ENCODE measurements at regions of chr2 and their contacts with region 1.

Region 1: DNA sequence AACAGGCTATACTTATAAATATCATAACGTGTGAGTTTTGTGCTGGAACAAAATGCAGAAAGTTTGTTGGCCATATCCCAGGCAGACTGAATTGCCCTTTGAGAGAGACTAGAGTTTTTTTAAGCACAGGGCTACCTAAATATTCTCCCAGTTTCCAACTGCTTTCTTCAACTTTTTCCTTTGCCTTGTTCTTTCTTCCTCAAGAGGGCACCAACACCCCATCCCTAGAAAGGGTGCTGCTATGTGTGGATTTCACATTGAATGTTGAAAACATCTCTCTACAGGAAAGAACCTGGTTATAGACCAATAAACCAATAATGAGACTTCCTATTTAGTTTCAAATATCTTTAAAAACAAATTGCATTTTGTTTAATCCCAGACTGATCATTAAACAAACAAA is 87.9 kb downstream of the ICOS start:
- DNase-seq: no peak
- H3K4me3 ChIP-seq: no peak overlapping the region
- H3K27ac ChIP-seq: no peak overlapping the region
- H3K4me1 ChIP-seq: no peaks in the 10 kb centered on the region
- H3K27me3 ChIP-seq: no peaks in the 10 kb centered on the region; a peak in 1 of 7 replicates
- CTCF ChIP-seq: peak in 2 of 3 experiments; percentile 61 to 66; a peak in 3 of 4 replicates
- EP300 ChIP-seq: no peak
- POLR2A ChIP-seq: no peak
- RAD21 ChIP-seq: peak; percentile 82 to 84

Region 2: DNA sequence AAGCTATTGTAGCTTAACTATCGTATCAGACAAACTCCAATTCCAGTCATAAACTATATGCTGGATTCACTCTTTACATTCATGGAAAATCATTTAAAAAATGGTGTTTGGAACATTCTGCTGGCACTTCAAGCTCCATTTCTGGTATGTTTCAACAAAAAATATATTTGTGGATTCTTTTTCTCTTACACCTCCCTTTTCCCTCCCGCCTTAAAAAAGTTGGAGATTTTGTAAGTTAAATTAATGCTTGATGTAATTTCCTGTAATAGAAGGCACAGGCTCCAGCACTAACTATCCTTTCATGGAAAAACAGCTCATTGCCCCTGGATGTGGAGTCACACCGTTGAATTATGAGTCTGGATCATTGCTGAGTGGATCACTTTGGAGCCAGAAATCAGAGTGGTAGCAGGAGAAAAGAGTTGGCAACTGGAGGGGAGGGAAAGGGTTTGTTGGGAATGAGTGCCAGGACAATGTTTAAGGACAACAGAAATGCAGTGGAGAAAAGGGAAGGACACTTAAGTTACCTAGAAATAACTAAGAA is 14.9 kb after region 1 on chr2:
- CTCF ChIA-PET with region 1: interaction called, 20 read pairs
- POLR2A ChIA-PET with region 1: no interaction called
- DNase-seq: no peak
- H3K4me3 ChIP-seq: no peak overlapping the region
- H3K27ac ChIP-seq: no peak overlapping the region
- H3K4me1 ChIP-seq: no peaks in the 10 kb centered on the region
- H3K27me3 ChIP-seq: no peaks in the 10 kb centered on the region
- CTCF ChIP-seq: no peak
- EP300 ChIP-seq: no peak
- POLR2A ChIP-seq: no peak
- RAD21 ChIP-seq: no peak

Region 3: DNA sequence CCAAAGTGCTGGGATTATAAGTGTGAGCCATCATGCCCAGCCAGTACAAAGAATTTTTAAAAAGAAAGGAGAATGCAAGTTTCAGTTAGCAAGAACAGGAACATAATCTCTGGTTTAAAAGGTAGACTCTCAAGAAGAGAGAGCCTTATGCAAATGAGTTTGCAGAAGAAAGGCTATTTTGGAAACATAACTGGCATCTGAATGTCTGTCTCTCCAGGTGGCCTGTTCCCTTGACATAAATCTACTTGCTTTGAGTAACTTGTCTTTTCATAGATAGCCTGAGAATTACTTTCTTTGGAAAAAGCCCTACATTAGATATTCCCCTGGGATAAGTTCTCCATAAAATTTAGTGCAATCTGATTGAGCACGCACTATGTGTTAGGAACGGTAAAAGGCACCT is 21.6 kb after region 1 on chr2:
- CTCF ChIA-PET with region 1: interaction called, 25 read pairs
- POLR2A ChIA-PET with region 1: no interaction called
- DNase-seq: no peak
- H3K4me3 ChIP-seq: no peak overlapping the region
- H3K27ac ChIP-seq: no peak overlapping the region
- H3K4me1 ChIP-seq: no peaks in the 10 kb centered on the region
- H3K27me3 ChIP-seq: no peaks in the 10 kb centered on the region
- CTCF ChIP-seq: no peak
- EP300 ChIP-seq: no peak
- POLR2A ChIP-seq: no peak
- RAD21 ChIP-seq: no peak

Region 4: DNA sequence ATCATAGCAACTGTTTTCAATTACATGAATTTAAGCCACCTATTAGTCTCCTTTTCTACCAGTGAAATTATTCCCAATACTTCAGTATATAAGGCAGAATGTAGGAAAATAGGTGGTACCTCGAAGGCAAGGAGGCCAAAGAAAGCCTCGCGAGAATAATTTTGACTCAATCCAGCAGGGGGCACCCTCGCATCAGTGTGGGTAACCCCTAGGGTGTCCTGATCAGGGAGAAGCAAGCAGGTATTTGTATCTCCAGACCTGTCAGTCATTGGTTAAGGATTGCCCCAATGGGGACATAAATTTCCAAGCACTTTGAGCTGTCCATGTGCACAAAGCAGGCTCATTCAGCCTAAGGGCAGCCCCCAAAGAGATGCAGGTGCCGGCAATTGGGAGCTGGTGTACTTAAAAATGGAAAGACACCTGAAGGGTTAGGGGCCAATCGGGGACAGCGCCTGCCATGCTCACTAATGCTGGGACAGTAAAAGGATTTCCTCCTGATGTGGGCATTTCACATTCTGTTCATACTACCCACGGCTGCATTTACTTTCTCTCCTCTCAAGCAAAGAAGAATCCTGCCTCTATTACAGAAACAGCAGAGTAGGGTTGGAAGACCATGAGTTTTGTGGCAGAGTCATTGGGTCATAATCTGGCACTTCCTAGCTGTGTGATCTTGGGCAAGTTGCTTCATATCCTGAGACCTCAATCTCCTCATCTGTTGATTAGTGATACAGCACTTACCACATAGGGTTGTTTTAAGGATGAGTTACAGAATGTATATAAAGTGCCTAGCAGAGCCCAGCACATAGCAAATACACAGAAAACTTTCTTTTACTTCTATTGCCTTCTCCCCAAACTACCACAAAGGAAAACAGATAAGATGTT is 48.2 kb after region 1 on chr2:
- CTCF ChIA-PET with region 1: interaction called, 36 read pairs
- POLR2A ChIA-PET with region 1: no interaction called
- DNase-seq: peak; percentile 38 to 90
- H3K4me3 ChIP-seq: no peak overlapping the region
- H3K27ac ChIP-seq: no peak overlapping the region
- H3K4me1 ChIP-seq: no peaks in the 10 kb centered on the region
- H3K27me3 ChIP-seq: no peaks in the 10 kb centered on the region
- CTCF ChIP-seq: peak; percentile 71 to 75 (median 74)
- EP300 ChIP-seq: no peak
- POLR2A ChIP-seq: no peak
- RAD21 ChIP-seq: peak; percentile 82 to 86

Region 5: GRCh38 chr2:204931562-204931961 is 907.1 kb after region 1 on chr2:
- CTCF ChIA-PET with region 1: no interaction called
- POLR2A ChIA-PET with region 1: no interaction called
- DNase-seq: no peak
- H3K4me3 ChIP-seq: no peak overlapping the region
- H3K27ac ChIP-seq: no peak overlapping the region
- H3K4me1 ChIP-seq: no peaks in the 10 kb centered on the region
- H3K27me3 ChIP-seq: no peaks in the 10 kb centered on the region
- CTCF ChIP-seq: no peak
- EP300 ChIP-seq: no peak
- POLR2A ChIP-seq: no peak
- RAD21 ChIP-seq: no peak